HCT116 (cell line): ENCODE measurements at regions of chr15 and their contacts with region 1.

Region 1: DNA sequence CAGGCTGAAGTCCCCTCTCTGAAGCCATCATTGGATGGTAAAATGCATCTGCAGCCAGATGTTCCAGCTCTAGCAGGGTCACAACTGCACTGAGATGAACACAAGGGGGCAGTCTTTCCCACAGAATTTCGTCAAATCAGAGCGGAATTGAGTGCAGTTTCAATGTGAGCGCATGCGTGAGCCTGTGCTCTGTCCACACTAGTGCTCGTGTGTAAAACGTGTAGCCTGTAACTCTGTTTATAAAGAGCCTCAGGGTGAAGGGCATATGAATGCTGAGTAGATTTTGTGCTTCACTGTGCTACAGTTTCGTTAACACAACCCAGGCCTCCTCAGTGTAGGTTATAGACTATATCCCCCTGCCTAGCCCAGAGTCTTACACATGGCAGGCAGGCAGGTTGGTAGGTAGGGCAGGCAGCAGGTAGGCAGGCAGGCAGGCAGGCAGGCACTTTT is 92.7 kb upstream of the GOLGA6L4 start:
- DNase-seq: peak; percentile 81
- ATAC-seq: peak; percentile 99
- H3K4me3 ChIP-seq: no peak overlapping the region
- H3K27ac ChIP-seq: no peak overlapping the region
- H3K4me1 ChIP-seq: peaks cover 0 to 5% of the 10 kb centered on the region in 2 experiments; a peak in 1 of 4 replicates
- H3K27me3 ChIP-seq: no peaks in the 10 kb centered on the region
- CTCF ChIP-seq: peak; percentile 74 to 87 (median 86); a peak in 5 of 6 replicates
- POLR2A ChIP-seq: no peak
- RAD21 ChIP-seq: peak; percentile 86

Region 2: GRCh38 chr15:84633311-84634227 is 490.7 kb after region 1 on chr15:
- CTCF ChIA-PET with region 1: no interaction called
- POLR2A ChIA-PET with region 1: no interaction called
- RAD21 ChIA-PET with region 1: no interaction called
- intact Hi-C with region 1: loop called (anchors 5 kb)
- DNase-seq: no peak
- ATAC-seq: peak; percentile 31
- H3K4me3 ChIP-seq: peak overlapping the region; percentile 47 to 60
- H3K27ac ChIP-seq: peak overlapping the region; percentile 69
- H3K4me1 ChIP-seq: peaks cover 8 to 29% of the 10 kb centered on the region in 2 experiments; a peak in 3 of 4 replicates
- H3K27me3 ChIP-seq: no peaks in the 10 kb centered on the region
- CTCF ChIP-seq: no peak
- POLR2A ChIP-seq: no peak
- RAD21 ChIP-seq: no peak

Region 3: DNA sequence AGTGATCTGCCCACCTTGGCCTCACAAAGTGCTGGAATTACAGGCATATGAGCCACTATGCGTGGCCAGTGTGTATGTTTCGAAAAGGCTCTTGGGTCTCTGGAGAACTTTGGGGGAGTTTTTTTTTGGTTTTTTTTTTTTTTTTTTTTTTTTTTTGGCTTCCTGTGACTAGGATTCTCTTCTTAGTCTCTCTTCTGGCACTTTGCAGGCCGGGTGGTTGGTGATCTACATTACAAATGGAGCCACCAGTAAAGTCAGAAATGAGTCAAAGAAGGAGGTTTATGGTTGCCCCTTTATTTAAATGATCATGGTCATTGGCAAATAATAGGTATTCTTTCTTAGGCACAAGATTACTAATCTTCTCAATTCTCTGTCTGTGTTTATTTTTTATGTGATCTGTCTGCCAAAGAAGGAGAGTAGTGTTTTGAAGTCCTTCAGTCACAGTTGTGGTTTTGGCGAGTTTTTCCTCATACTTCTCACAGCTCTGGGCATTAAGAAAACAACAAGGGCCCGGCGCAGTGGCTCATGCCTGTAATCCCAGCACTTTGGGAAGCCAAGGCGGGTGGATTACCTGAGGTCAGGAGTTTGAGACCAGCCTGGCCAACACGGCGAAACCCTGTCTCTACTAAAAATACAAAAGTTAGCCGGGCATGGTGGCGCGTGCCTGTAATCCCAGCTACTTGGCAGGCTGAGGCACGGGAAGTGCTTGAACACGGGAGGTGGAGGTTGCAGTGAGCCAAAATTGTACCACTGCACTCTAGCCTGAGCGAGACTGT is 877.1 kb after region 1 on chr15:
- CTCF ChIA-PET with region 1: no interaction called
- POLR2A ChIA-PET with region 1: no interaction called
- RAD21 ChIA-PET with region 1: no interaction called
- intact Hi-C with region 1: no loop called
- DNase-seq: no peak
- ATAC-seq: no peak
- H3K4me3 ChIP-seq: no peak overlapping the region
- H3K27ac ChIP-seq: no peak overlapping the region
- H3K4me1 ChIP-seq: peaks cover 4 to 10% of the 10 kb centered on the region in 2 experiments; a peak in 2 of 4 replicates
- H3K27me3 ChIP-seq: no peaks in the 10 kb centered on the region
- CTCF ChIP-seq: no peak
- POLR2A ChIP-seq: no peak
- RAD21 ChIP-seq: no peak